Esophagus squamous epithelium (tissue), 5 donors: ENCODE measurements at regions of chr1 and their contacts with region 1.

Region 1: DNA sequence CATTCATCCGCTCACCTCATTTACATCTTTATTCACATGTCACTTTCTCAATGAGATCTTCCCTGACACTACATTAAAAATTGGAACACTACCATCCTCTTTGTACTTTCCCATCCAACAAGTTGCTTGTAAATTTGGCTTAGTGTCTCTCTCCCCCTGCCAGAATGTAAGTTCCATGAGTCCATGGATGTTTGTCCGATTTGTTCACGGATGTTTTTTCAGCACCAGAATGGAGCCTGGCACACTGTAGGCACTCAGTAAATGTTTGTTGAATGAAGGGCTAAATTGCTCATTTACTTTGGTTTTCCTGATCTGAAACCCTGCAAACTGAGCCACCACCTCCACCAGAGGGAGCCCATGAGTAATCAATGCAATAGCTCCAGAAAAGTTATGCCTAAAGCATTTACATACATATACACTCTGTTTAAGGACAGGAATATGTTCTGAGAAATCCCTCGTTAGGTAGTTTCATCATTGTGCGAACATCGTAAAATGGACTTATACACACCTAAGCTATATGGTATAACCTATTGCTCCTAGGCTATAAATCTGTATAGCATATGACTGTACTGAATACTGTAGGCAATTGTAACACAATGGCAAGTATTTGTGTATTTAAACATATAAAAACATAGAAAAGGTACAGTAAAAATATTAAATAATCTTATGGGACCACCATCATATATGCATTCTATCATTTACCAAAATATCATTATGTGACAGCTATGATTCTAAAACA is 2.8 kb upstream of the EYA3 start:
- DNase-seq: no peak
- H3K4me3 ChIP-seq: no peak overlapping the region
- H3K27ac ChIP-seq: peak overlapping the region in 1 of 4 donors; percentile 22
- H3K4me1 ChIP-seq: peaks cover 8 to 24% (median 14%) of the 10 kb centered on the region in 3 donors
- H3K27me3 ChIP-seq: no peaks in the 10 kb centered on the region
- CTCF ChIP-seq: peak; percentile 55 to 89 (median 82)
- POLR2A ChIP-seq: no peak

Region 2: GRCh38 chr1:28056129-28056925 is 34.9 kb before region 1 on chr1:
- intact Hi-C with region 1: no loop called
- DNase-seq: no peak
- H3K4me3 ChIP-seq: no peak overlapping the region
- H3K27ac ChIP-seq: no peak overlapping the region
- H3K4me1 ChIP-seq: peaks cover 0 to 15% (median 0%) of the 10 kb centered on the region in 3 donors
- H3K27me3 ChIP-seq: no peaks in the 10 kb centered on the region
- CTCF ChIP-seq: no peak
- POLR2A ChIP-seq: no peak

Region 3: DNA sequence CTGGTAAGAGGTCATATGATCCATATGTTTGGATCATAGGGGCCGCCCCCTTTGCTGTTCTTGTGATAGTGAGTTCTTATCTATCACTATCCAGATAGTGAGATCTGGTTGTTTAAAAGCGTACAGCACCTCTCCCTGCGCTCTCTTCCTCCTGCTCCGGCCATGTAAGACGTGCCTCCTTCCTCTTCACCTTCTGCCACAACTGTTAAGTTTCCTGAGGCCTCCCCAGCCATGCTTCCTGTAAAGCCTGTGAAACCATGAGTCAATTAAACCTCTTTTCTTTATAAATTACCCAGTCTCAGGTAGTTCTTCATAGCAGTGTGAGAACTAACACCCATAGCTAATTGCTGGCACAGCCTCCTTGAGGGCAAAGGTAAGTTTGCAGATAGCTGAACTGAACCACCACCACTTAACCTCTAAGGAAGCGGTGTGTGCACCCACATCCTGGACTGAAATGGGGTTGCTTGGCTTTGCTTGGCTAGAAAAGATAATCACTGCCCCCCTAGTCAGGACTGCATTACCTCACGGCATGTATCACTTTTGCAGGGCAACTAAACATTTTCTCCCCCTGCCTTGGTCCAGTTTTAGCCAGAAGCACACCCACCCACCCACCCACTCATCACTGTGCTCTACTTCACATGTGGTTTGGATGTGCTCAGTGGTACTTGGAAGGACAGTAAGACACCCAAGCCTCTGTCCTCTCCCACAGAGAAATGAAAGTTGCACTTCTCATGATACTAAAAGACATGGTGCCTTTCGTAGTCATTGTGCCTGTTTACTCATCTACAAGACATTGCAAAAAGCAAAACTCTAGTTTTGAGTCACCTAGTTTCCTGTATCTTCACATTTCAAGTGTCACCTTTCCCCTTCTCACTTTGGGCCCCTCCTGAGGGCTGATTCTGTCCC is 108.4 kb after region 1 on chr1:
- intact Hi-C with region 1: loop called (anchors 5 kb)
- DNase-seq: no peak
- H3K4me3 ChIP-seq: no peak overlapping the region
- H3K27ac ChIP-seq: peak overlapping the region in 2 of 4 donors; percentile 18 to 61
- H3K4me1 ChIP-seq: peaks cover 6 to 33% (median 14%) of the 10 kb centered on the region in 3 donors
- H3K27me3 ChIP-seq: no peaks in the 10 kb centered on the region
- CTCF ChIP-seq: no peak
- POLR2A ChIP-seq: no peak

Region 4: DNA sequence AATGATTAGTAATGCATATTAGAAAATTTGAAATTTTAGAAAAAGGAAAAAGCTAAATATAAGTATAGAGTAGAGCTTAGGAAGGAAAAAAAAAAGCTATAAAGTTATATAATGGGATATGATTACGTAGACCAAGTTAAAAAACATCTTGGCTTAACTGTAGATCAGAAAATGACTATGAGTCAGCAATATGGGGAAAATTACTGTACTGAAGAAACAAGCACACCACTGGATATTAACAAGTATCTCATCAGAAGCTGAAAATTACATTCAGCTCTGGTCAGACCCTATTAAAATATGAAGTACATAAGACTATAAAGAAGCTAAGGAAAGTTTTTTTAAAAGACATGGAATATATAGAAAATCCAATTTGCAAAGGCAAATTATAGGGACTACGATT is 122.1 kb after region 1 on chr1:
- intact Hi-C with region 1: loop called (anchors 5 kb)
- DNase-seq: no peak
- H3K4me3 ChIP-seq: no peak overlapping the region
- H3K27ac ChIP-seq: no peak overlapping the region
- H3K4me1 ChIP-seq: peaks cover 0 to 6% (median 0%) of the 10 kb centered on the region in 3 donors
- H3K27me3 ChIP-seq: no peaks in the 10 kb centered on the region
- CTCF ChIP-seq: no peak
- POLR2A ChIP-seq: no peak

Region 5: GRCh38 chr1:28229089-28229488 is 137.9 kb after region 1 on chr1:
- intact Hi-C with region 1: no loop called
- DNase-seq: no peak
- H3K4me3 ChIP-seq: no peak overlapping the region
- H3K27ac ChIP-seq: no peak overlapping the region
- H3K4me1 ChIP-seq: peaks cover 15 to 34% (median 19%) of the 10 kb centered on the region in 3 donors
- H3K27me3 ChIP-seq: no peaks in the 10 kb centered on the region
- CTCF ChIP-seq: no peak
- POLR2A ChIP-seq: no peak